ENCODE measurements at regions of chr1 and their contacts with region 1.

Region 1: GRCh38 chr1:160193091-160193819 is 2.9 kb downstream of the CASQ1 start:
- DNase-seq: peak; percentile 78
- H3K4me3 ChIP-seq: no peak overlapping the region
- H3K27ac ChIP-seq: no peak overlapping the region
- H3K27me3 ChIP-seq: peaks cover 8% of the 10 kb centered on the region
- CTCF ChIP-seq: peak; percentile 99

Region 2: GRCh38 chr1:159370855-159371254 is 822.4 kb before region 1 on chr1:
- CTCF ChIA-PET with region 1: no interaction called
- POLR2A ChIA-PET with region 1: no interaction called
- DNase-seq: no peak
- H3K4me3 ChIP-seq: no peak overlapping the region
- H3K27ac ChIP-seq: no peak overlapping the region
- H3K27me3 ChIP-seq: no peaks in the 10 kb centered on the region
- CTCF ChIP-seq: no peak

Region 3: GRCh38 chr1:160070243-160071163 is 122.8 kb before region 1 on chr1:
- CTCF ChIA-PET with region 1: no interaction called
- POLR2A ChIA-PET with region 1: no interaction called
- DNase-seq: no peak
- H3K4me3 ChIP-seq: peak overlapping the region; percentile 62
- H3K27ac ChIP-seq: no peak overlapping the region
- H3K27me3 ChIP-seq: peaks cover 67% of the 10 kb centered on the region
- CTCF ChIP-seq: no peak

Region 4: DNA sequence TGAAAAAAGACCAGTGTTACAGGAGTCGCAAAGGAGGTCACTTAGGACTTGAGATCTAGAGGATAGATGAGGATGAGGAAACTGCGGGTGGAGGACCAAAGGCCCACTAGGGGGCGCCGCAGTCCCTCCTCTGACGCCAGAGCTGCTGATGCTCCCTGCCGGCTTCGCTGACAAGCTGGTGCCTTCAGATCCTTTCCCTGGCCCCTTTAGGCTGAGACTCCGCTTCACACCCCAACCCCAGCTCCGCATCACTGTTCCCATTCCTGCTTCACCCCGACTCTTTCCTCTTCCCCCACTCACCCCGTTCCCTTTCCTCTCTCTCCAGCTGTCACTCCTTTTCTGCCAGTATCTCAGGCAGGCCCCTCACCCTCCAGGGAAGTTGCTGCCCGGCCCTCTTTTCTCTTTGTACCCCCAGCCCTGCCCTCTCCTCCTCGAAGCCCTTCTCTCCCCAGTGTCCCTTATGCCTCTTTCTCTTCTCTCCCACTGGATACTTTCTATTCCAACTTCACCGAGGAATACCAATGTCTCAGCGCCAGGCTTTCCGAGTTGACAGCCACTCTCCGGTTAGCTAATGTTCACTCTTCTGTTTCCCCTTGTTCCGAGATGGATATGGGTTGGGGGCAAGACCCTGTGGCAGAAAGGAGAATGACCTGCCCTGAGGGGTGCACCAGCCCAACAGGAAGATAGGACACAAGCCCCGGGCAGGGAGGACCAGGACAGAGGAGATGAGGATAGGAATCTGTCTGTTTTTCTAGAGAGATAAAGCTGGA is 107.4 kb before region 1 on chr1:
- CTCF ChIA-PET with region 1: interaction called, 20 read pairs
- POLR2A ChIA-PET with region 1: no interaction called
- DNase-seq: peak; percentile 32
- H3K4me3 ChIP-seq: no peak overlapping the region
- H3K27ac ChIP-seq: no peak overlapping the region
- H3K27me3 ChIP-seq: peaks cover 43% of the 10 kb centered on the region
- CTCF ChIP-seq: peak; percentile 87

Region 5: DNA sequence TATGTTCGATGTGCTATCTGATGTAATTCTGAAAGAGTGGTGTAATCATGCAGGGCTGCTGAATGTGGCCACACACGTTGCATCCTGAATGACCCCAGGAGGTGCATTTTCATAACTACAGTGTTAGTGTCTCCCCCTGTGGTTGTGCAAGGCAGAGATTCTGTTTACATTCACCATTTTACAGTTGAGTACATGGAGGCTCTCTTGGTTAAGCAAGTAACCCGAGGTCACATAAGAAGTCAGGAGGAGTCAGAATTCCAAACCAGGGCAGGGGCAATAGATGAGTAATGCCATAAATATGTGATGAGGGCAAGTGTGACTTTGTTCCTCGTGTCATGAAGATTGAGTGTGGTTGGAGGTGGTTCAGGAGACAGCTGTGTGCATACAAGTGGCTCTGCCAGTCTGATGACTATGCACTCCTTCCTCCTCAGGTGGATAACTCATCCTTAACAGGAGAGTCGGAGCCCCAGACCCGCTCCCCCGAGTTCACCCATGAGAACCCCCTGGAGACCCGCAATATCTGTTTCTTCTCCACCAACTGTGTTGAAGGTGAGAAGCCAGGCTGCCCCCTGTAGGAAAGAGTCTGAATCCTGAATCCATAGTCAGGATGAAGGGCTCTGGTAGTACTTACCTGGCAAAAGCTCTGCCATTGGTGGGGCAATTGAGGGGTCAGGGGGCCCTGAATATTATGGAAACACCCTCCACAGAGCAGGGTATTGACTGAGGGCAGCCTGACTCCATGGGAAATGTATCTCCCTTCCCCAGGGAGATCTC is 68.4 kb before region 1 on chr1:
- CTCF ChIA-PET with region 1: interaction called, 13 read pairs
- POLR2A ChIA-PET with region 1: no interaction called
- DNase-seq: peak; percentile 76
- H3K4me3 ChIP-seq: no peak overlapping the region
- H3K27ac ChIP-seq: peak overlapping the region; percentile 87
- H3K27me3 ChIP-seq: peaks cover 5% of the 10 kb centered on the region
- CTCF ChIP-seq: peak; percentile 51

Region 6: DNA sequence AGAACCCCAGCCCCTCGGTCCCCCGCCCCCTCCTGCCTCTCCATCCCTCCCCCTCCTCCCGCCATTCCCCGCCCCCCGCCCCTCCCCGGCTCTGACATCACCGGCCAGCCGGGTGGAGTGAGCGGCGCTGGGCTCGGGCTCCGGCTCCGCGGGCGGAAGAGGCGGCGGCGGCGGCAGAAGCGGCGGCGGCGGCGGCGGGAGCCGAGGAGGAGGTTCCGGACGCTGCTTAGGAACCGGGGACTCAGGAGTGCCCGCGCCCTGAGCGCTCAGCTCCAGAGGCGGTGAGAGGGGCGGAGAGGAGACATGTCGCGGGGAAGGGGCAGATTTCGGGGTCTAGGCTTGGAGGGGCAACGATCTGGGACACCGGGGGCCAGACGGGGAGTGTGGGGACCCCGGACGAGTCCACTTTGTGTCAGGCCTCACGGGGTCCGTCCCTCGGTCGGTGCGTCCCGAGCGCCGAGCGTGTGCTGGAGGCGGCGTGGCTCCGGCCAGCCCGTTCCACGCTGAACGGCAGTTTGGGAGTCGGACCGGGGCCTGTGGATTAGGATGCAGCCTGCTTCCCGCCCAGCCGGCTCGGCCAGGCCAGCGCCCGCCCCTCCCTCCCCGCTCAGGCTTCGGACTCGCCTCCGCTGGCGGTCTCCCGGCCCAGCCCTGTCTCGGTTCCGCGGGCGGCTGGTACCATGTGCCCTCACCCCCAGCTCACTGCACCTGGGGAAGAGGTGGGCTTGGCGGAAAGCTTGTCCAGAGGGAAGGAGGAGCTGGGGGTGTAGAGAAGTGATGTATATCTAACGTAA is 12.2 kb after region 1 on chr1 and contains the start of gene PEA15:
- CTCF ChIA-PET with region 1: interaction called, 130 read pairs
- POLR2A ChIA-PET with region 1: no interaction called
- DNase-seq: no peak
- H3K4me3 ChIP-seq: peak within 1 kb of the TSS; percentile 95
- H3K27ac ChIP-seq: peak within 1 kb of the TSS; percentile 75
- H3K27me3 ChIP-seq: no peaks in the 10 kb centered on the region
- CTCF ChIP-seq: no peak
- polyA plus RNA-seq, gene PEA15: 512 and 555 TPM in 2 replicates

Region 7: DNA sequence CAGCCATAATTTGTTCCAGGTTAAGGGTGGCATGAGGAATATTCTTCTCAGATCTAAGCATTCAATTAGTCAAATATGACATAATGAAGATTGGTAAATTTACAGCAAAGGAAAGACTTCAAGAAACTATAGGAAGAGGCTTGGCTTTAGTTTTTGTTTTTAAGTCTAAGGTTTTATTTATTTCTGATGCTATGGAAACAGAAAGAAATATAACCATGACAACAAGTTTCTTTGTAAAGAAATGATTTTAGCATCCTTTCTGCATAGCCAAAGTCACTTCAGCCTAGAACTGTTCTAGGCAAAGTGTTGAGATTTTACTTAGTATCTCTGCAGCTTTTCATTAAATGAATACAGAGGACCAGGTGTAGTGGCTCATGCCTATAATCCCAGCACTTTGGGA is 39.7 kb after region 1 on chr1:
- CTCF ChIA-PET with region 1: interaction called, 25 read pairs
- POLR2A ChIA-PET with region 1: no interaction called
- DNase-seq: no peak
- H3K4me3 ChIP-seq: no peak overlapping the region
- H3K27ac ChIP-seq: no peak overlapping the region
- H3K27me3 ChIP-seq: no peaks in the 10 kb centered on the region
- CTCF ChIP-seq: no peak

Region 8: GRCh38 chr1:160261893-160262794 is 68.9 kb after region 1 on chr1 and contains the start of gene DCAF8:
- CTCF ChIA-PET with region 1: interaction called, 15 read pairs
- POLR2A ChIA-PET with region 1: interaction called, 3 read pairs
- DNase-seq: peak; percentile 93
- H3K4me3 ChIP-seq: peak within 1 kb of the TSS; percentile 100
- H3K27ac ChIP-seq: peak within 1 kb of the TSS; percentile 94
- H3K27me3 ChIP-seq: no peaks in the 10 kb centered on the region
- CTCF ChIP-seq: no peak
- polyA plus RNA-seq, gene DCAF8: 108 and 111 TPM in 2 replicates

Region 9: GRCh38 chr1:160376525-160377131 is 183.4 kb after region 1 on chr1:
- CTCF ChIA-PET with region 1: interaction called, 23 read pairs
- POLR2A ChIA-PET with region 1: no interaction called
- DNase-seq: peak; percentile 37
- H3K4me3 ChIP-seq: no peak overlapping the region
- H3K27ac ChIP-seq: no peak overlapping the region
- H3K27me3 ChIP-seq: peaks cover 2% of the 10 kb centered on the region
- CTCF ChIP-seq: peak; percentile 99